ENCODE measurements at regions of chr7 and their contacts with region 1.

Region 1: GRCh38 chr7:37901236-37901827 is 15.3 kb downstream of the SFRP4 start:
- DNase-seq: no peak
- H3K4me3 Mint-ChIP-seq: no peak overlapping the region
- H3K27ac Mint-ChIP-seq: no peak overlapping the region
- H3K4me1 Mint-ChIP-seq: no peaks in the 10 kb centered on the region
- H3K27me3 Mint-ChIP-seq: peaks cover 6% of the 10 kb centered on the region

Region 2: GRCh38 chr7:37916673-37917660 is 15.6 kb after region 1 on chr7 and contains the start of gene SFRP4:
- CTCF ChIA-PET with region 1: interaction called, 31 read pairs
- POLR2A ChIA-PET with region 1: no interaction called
- intact Hi-C with region 1: no loop called
- DNase-seq: peak; percentile 11
- H3K4me3 Mint-ChIP-seq: no peak within 1 kb of the TSS
- H3K27ac Mint-ChIP-seq: no peak within 1 kb of the TSS
- H3K4me1 Mint-ChIP-seq: peaks cover 12% of the 10 kb centered on the region
- H3K27me3 Mint-ChIP-seq: peaks cover 57% of the 10 kb centered on the region
- total RNA-seq, gene SFRP4: not detected

Region 3: DNA sequence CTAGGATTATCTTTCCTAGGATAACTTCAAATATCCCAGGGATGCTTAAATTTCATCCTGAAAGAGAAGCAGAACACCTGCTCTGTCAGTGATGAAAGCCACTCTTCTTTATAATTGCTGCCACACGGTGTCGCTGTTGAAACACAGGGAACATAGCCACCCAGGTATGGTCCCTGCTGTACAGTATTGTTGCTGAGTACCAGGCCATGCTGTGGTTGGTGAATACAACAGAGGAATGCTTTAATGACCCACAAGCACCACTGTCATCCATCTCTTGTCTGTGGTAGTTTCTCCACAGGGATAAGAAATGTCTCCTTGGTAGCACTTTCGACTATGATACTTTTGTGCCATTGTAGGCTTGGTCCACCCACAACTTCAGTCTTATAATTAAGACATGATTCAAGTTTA is 206.2 kb after region 1 on chr7:
- CTCF ChIA-PET with region 1: no interaction called
- POLR2A ChIA-PET with region 1: no interaction called
- intact Hi-C with region 1: loop called (anchors 5 kb)
- DNase-seq: peak; percentile 73
- H3K4me3 Mint-ChIP-seq: no peak overlapping the region
- H3K27ac Mint-ChIP-seq: no peak overlapping the region
- H3K4me1 Mint-ChIP-seq: no peaks in the 10 kb centered on the region
- H3K27me3 Mint-ChIP-seq: peaks cover 13% of the 10 kb centered on the region